ENCODE measurements at regions of chr2 and their contacts with region 1.

Region 1: GRCh38 chr2:136135921-136136906 is 18.3 kb upstream of the CXCR4 start:
- DNase-seq: peak; percentile 47
- H3K4me3 Mint-ChIP-seq: peak overlapping the region; percentile 13
- H3K27ac Mint-ChIP-seq: no peak overlapping the region
- H3K4me1 Mint-ChIP-seq: peaks cover 74% of the 10 kb centered on the region
- H3K27me3 Mint-ChIP-seq: peaks cover 33% of the 10 kb centered on the region

Region 2: GRCh38 chr2:135664623-135665068 is 471.6 kb before region 1 on chr2:
- intact Hi-C with region 1: loop called (anchors 10 kb)
- DNase-seq: no peak
- H3K4me3 Mint-ChIP-seq: no peak overlapping the region
- H3K27ac Mint-ChIP-seq: peak overlapping the region; percentile 77
- H3K4me1 Mint-ChIP-seq: peaks cover 37% of the 10 kb centered on the region
- H3K27me3 Mint-ChIP-seq: no peaks in the 10 kb centered on the region

Region 3: DNA sequence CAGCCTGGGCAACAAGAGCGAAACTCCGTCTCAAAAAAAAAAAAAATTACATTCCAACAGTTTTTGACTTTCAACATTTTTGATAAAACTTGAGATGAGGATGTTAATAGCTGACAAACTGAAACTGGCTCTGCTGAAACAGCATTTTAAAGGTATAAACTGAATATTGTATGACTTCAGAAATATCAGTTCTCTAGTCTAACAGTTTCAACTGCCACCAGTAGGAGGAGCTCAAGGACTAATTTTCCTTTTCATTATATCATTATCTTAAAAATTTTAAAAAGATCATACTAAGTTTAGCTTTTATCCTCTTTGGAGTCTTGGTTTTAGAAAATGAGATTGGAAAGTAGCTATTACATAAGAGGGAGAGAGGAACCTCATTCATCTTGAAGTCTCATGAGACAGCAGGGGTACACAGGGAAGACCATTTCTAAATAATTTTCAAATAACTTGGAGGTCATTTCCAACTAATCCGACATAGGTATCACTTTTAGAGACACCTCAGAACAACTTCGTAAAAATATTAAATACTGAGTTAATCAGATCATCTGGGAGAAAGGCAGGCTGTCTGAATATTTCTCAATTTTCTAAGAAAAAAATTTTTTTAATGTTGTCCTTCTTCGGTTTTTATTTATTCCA is 222.4 kb before region 1 on chr2:
- intact Hi-C with region 1: loop called (anchors 5 kb)
- DNase-seq: no peak
- H3K4me3 Mint-ChIP-seq: no peak overlapping the region
- H3K27ac Mint-ChIP-seq: peak overlapping the region; percentile 76
- H3K4me1 Mint-ChIP-seq: peaks cover 14% of the 10 kb centered on the region
- H3K27me3 Mint-ChIP-seq: no peaks in the 10 kb centered on the region

Region 4: GRCh38 chr2:135985018-135985825 is 151.0 kb before region 1 on chr2 and contains the start of gene DARS1:
- intact Hi-C with region 1: loop called (anchors 1 kb)
- DNase-seq: peak; percentile 80
- H3K4me3 Mint-ChIP-seq: peak within 1 kb of the TSS; percentile 94
- H3K27ac Mint-ChIP-seq: peak within 1 kb of the TSS; percentile 98
- H3K4me1 Mint-ChIP-seq: peaks cover 41% of the 10 kb centered on the region
- H3K27me3 Mint-ChIP-seq: no peaks in the 10 kb centered on the region
- total RNA-seq, gene DARS1: 179 and 183 TPM in 2 replicates

Region 5: GRCh38 chr2:136126021-136126420 is 10.2 kb before region 1 on chr2:
- intact Hi-C with region 1: no loop called
- DNase-seq: no peak
- H3K4me3 Mint-ChIP-seq: no peak overlapping the region
- H3K27ac Mint-ChIP-seq: no peak overlapping the region
- H3K4me1 Mint-ChIP-seq: peaks cover 57% of the 10 kb centered on the region
- H3K27me3 Mint-ChIP-seq: peaks cover 38% of the 10 kb centered on the region

Region 6: GRCh38 chr2:136207030-136207623 is 70.9 kb after region 1 on chr2:
- intact Hi-C with region 1: loop called (anchors 1 kb)
- DNase-seq: no peak
- H3K4me3 Mint-ChIP-seq: peak overlapping the region; percentile 28
- H3K27ac Mint-ChIP-seq: peak overlapping the region; percentile 85
- H3K4me1 Mint-ChIP-seq: peaks cover 38% of the 10 kb centered on the region
- H3K27me3 Mint-ChIP-seq: no peaks in the 10 kb centered on the region

Region 7: DNA sequence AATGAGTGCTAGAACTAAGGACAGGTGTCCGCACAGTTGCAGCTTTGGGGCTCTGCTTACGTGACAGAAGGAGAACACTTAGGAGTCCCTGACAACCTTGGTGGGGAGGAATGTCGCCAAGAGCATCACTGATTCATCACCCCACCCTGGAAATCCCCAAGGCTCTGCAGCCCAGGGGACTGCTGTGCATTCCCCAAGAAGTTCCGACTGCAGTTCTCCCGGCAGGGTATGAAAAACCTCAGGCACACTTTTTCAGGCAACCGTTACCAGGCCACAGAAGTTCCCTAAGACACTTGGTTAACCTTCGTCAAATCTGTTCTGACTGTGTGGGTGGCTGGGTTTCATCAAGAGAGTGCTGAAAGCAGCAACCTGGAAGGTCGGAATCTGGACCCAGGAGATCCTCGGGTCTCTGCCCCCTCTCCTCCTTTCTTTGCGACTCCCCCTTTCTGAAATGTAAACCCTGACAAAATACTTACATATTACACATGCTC is 173.8 kb after region 1 on chr2:
- intact Hi-C with region 1: loop called (anchors 1 kb)
- DNase-seq: no peak
- H3K4me3 Mint-ChIP-seq: peak overlapping the region; percentile 41
- H3K27ac Mint-ChIP-seq: peak overlapping the region; percentile 94
- H3K4me1 Mint-ChIP-seq: peaks cover 47% of the 10 kb centered on the region
- H3K27me3 Mint-ChIP-seq: no peaks in the 10 kb centered on the region

Region 8: GRCh38 chr2:136378712-136379595 is 242.7 kb after region 1 on chr2:
- intact Hi-C with region 1: loop called (anchors 1 kb)
- DNase-seq: peak; percentile 66
- H3K4me3 Mint-ChIP-seq: no peak overlapping the region
- H3K27ac Mint-ChIP-seq: no peak overlapping the region
- H3K4me1 Mint-ChIP-seq: peaks cover 82% of the 10 kb centered on the region
- H3K27me3 Mint-ChIP-seq: no peaks in the 10 kb centered on the region

Measured in activated T-helper 2 cell treated with anti-CD3 and anti-CD28 coated beads, Interferon-gamma antibody, Interleukin-2, Interleukin-4, amounts not matched to agents 10 μg/mL and 5 μg/mL and 100 μg/mL, durations not matched to agents 14 hours and 24 hours and 36 hours (primary cell).